Stomach (tissue), 19 donors: ENCODE measurements at regions of chrX and their contacts with region 1.

Region 1: DNA sequence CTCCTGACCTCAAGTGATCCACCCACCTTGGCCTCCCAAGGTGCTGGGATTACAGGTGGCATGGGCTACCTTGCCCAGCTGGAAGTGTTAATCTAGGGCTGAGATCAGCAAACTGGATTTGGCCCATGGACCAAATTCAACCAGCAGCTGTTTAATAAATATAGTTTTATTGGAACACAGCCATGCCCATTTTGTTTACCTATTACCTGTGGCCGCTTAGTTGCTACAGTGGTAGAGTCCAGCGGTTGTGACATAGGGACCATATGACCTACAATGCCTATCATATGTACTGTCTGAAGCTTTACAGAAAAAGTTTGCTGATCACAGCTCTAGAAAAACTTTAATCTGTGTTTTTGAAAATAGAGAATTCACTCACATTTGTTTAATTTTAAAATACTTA is 17.2 kb upstream of the PDHA1 start:
- DNase-seq: no peak
- H3K4me3 ChIP-seq: no peak overlapping the region
- H3K27ac ChIP-seq: no peak overlapping the region
- H3K4me1 ChIP-seq: no peaks in the 10 kb centered on the region
- H3K27me3 ChIP-seq: no peaks in the 10 kb centered on the region
- CTCF ChIP-seq: no peak
- EP300 ChIP-seq: no peak
- POLR2A ChIP-seq: no peak

Region 2: GRCh38 chrX:18390941-18391538 is 935.5 kb before region 1 on chrX:
- intact Hi-C with region 1: loop called (anchors 5 kb)
- DNase-seq: peak; percentile 80 to 83
- H3K4me3 ChIP-seq: no peak overlapping the region
- H3K27ac ChIP-seq: no peak overlapping the region
- H3K4me1 ChIP-seq: no peaks in the 10 kb centered on the region
- H3K27me3 ChIP-seq: no peaks in the 10 kb centered on the region
- CTCF ChIP-seq: peak in 5 of 7 experiments; percentile 14 to 86 (median 62)
- EP300 ChIP-seq: no peak
- POLR2A ChIP-seq: no peak